GM10248 (cell line): ENCODE measurements at regions of chr1 and their contacts with region 1.

Region 1: GRCh38 chr1:42777852-42778251 is 6.9 kb upstream of the TMEM269 start:
- DNase-seq: peak; percentile 57
- CTCF ChIP-seq: peak; percentile 63

Region 2: GRCh38 chr1:42639116-42639515 is 138.7 kb before region 1 on chr1:
- CTCF ChIA-PET with region 1: no interaction called
- POLR2A ChIA-PET with region 1: no interaction called
- DNase-seq: no peak
- CTCF ChIP-seq: no peak

Region 3: DNA sequence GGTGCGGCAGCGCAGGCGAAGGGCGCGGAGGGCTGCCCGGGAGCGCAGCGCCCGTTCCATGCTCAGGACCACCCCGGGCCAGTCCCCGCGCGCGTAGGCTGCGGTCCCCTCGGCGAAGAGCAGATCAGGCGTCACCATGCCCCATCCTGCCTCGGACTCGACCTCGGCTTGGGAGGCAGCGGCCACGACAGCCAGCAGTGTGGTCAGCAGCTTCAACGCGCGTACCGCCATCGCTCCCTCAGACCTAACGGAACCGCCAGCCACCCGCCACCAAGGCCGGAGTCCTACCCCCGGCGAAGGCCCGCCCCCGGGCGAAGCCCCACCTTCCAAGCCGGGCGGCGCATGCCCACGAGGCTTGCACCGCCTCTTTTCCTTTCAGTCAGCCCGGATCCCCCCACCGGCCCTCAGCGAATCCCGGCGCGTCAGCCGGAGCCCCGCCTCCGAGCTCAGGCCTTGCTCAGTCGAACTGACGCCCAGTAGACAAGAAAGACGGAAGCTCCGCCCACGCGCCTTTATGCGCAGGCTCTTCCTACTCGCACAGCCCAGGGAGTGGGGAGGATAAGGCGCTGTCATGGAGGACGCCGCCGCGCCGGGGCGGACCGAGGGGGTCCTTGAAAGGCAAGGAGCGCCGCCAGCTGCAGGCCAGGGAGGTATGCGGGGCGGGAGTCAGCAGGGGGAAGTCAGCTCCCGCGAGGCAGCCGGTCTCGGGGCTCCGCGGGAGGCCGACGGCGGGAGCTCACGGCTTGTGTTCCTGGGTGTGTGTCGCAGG is 10.9 kb before region 1 on chr1 and contains the starts of genes C1orf50 and P3H1:
- CTCF ChIA-PET with region 1: interaction called, 59 read pairs
- POLR2A ChIA-PET with region 1: interaction called, 3 read pairs
- DNase-seq: peak; percentile 98
- CTCF ChIP-seq: no peak

Region 4: DNA sequence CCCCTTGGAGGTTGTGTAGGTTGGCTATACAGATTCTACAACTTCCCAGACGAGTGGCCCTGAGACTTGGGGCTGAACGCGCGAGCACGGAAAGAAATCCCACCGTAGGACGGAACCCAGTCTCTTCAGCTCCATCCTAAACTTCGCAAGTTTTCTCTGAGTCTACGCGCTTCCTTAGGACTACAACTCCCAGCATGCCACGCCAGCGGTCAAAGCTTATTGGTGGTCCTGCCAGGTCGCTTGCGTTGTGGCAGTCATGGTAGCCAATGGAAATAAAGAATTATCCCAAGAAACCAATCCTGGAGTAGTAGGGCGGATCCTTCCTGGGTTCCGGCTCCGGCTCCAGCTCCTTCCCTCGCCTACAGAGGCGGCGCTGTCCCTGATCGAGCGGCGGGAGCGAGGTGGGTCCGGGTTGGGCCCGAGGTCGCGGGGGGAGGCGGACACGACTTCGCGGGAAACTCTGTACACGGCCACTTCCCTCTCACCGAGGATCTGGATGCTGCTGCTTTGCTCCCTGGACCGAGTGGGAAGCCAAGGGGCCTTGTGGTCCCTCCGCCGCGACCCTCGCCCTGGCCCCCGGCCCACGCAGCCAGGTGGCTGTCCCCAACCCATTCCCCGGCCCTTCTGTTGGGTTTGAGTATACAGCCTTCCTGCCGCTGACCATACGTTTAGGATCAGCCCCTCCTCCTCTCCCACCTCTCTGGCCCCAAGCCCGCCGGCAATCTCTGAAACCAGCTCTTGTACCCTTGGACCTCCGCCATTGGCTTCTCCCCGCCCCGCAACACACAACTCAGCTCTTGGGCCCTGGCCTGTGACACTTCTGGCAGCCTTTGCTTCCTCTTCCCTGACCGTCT is 68.6 kb after region 1 on chr1 and contains the start of gene ZNF691:
- CTCF ChIA-PET with region 1: interaction called, 16 read pairs
- POLR2A ChIA-PET with region 1: interaction called, 3 read pairs
- DNase-seq: peak; percentile 96
- CTCF ChIP-seq: peak; percentile 42

Region 5: DNA sequence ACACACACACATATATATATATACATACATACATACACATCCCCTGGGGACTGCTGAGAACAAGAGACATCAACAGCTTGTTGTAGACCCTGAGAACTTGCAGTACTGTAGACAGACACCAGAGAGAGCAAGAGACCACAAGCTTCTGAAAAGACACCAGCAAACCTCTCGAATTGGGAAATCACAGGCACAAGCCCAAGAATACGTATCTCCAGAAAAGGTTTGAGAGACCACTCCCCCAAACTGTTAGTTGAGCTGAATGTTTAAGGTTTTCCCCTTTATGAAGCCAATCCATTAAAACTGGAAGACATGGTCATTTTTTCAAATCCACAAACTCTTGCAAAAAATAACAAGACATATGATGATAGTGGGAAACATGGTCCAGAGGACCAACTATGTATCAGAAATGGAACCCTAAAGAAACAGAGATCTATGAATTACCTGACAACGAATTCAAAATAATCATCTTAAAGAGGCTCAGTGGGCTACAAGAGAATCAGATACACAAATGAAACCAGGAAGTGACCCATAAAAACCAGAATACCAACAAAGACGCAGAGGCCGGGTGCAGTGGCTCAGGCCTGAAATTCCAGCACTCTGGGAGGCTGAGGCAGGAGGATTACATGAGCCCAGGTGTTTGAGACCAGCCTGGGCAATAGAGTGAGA is 135.7 kb after region 1 on chr1:
- CTCF ChIA-PET with region 1: interaction called, 26 read pairs
- POLR2A ChIA-PET with region 1: no interaction called
- DNase-seq: peak; percentile 60
- CTCF ChIP-seq: peak; percentile 62